ENCODE measurements at regions of chr16 and their contacts with region 1.

Region 1: GRCh38 chr16:51982715-51983680 is 563.9 kb downstream of the TOX3 start:
- H3K4me3 Mint-ChIP-seq: no peak overlapping the region
- H3K27ac Mint-ChIP-seq: no peak overlapping the region
- H3K4me1 Mint-ChIP-seq: no peaks in the 10 kb centered on the region
- H3K27me3 Mint-ChIP-seq: no peaks in the 10 kb centered on the region

Region 2: GRCh38 chr16:51818342-51818944 is 164.6 kb before region 1 on chr16:
- intact Hi-C with region 1: loop called (anchors 10 kb)
- H3K4me3 Mint-ChIP-seq: no peak overlapping the region
- H3K27ac Mint-ChIP-seq: no peak overlapping the region
- H3K4me1 Mint-ChIP-seq: no peaks in the 10 kb centered on the region
- H3K27me3 Mint-ChIP-seq: no peaks in the 10 kb centered on the region